Tibial artery (tissue), 4 donors: ENCODE measurements at regions of chr12 and their contacts with region 1.

Region 1: GRCh38 chr12:17283563-17283962 is 677.6 kb upstream of the LMO3 start:
- DNase-seq: no peak
- H3K4me3 ChIP-seq: no peak overlapping the region
- H3K27ac ChIP-seq: no peak overlapping the region
- H3K4me1 ChIP-seq: no peaks in the 10 kb centered on the region
- H3K27me3 ChIP-seq: no peaks in the 10 kb centered on the region
- CTCF ChIP-seq: no peak

Region 2: DNA sequence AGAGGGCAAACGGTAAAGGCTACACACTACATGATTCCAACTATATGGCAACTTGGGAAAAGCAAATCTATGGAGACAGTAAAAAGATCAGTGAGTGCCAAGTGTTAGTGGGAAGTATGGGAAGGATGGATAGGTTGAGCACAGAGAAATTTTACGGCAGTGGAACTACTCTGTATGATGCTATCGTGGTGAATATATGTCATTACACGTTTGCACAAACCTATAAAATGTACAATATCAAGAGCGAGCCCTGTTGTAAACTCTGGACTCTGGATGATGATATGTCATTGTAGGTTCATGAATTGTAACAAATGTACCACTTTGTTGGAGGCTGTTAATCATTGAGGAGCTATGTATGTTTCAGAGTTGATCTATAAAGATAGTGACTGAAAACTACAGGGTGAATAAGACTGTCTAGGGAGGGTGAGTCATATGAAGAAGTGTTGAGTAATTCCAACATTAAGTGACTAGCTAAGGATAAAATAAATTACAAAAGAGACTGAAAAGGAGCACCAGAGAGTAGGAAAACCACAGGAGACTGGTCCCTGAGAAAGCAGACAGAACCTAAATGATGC is 328.4 kb before region 1 on chr12:
- intact Hi-C with region 1: no loop called
- DNase-seq: no peak
- H3K4me3 ChIP-seq: no peak overlapping the region
- H3K27ac ChIP-seq: no peak overlapping the region
- H3K4me1 ChIP-seq: no peaks in the 10 kb centered on the region
- H3K27me3 ChIP-seq: no peaks in the 10 kb centered on the region
- CTCF ChIP-seq: no peak

Region 3: DNA sequence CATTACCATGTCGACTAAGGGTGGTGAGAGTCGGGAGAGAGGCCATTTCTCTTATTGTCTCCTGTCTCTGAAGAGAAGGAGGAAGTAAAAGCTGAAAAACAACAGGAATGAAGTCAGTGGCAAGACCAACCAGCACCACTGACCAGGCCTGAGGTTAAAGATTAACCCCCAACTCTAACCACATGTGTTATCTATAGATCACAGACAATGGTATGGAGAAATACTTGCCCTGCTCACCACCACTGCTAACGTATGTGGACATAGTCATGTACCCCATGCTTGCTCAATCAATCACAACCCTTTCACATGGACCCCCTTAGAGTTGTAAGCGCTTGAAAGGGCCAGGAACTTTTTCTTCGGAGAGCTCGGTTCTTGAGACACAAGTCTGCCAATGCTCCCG is 13.3 kb after region 1 on chr12:
- intact Hi-C with region 1: no loop called
- DNase-seq: no peak
- H3K4me3 ChIP-seq: no peak overlapping the region
- H3K27ac ChIP-seq: no peak overlapping the region
- H3K4me1 ChIP-seq: no peaks in the 10 kb centered on the region
- H3K27me3 ChIP-seq: no peaks in the 10 kb centered on the region
- CTCF ChIP-seq: no peak

Region 4: GRCh38 chr12:18546416-18547074 is 1263.0 kb after region 1 on chr12:
- intact Hi-C with region 1: loop called (anchors 10 kb)
- DNase-seq: no peak
- H3K4me3 ChIP-seq: no peak overlapping the region
- H3K27ac ChIP-seq: no peak overlapping the region
- H3K4me1 ChIP-seq: no peaks in the 10 kb centered on the region
- H3K27me3 ChIP-seq: no peaks in the 10 kb centered on the region
- CTCF ChIP-seq: no peak